ENCODE measurements at regions of chr10 and their contacts with region 1.

Region 1: DNA sequence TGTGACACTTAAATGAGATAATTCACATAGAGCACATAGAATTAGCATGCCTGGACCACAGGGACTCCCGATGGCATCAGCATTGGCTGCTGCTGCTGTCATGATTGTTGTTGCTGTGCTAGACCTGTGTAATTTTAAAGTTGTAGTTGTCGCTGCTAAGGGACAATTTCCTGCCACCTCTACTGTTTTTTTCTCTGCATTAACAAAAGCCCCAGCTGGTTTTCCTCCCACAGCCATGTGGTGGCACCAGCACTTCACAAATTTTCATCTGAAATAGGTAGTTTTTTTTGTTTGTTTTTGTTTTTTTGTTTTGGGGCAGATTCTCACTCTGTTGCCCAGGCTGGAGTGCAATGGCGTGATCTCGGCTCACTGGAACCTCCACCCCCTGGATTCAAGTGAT is 25.4 kb upstream of the PRXL2A start:
- DNase-seq: peak; percentile 64
- CTCF ChIP-seq: peak; percentile 52

Region 2: DNA sequence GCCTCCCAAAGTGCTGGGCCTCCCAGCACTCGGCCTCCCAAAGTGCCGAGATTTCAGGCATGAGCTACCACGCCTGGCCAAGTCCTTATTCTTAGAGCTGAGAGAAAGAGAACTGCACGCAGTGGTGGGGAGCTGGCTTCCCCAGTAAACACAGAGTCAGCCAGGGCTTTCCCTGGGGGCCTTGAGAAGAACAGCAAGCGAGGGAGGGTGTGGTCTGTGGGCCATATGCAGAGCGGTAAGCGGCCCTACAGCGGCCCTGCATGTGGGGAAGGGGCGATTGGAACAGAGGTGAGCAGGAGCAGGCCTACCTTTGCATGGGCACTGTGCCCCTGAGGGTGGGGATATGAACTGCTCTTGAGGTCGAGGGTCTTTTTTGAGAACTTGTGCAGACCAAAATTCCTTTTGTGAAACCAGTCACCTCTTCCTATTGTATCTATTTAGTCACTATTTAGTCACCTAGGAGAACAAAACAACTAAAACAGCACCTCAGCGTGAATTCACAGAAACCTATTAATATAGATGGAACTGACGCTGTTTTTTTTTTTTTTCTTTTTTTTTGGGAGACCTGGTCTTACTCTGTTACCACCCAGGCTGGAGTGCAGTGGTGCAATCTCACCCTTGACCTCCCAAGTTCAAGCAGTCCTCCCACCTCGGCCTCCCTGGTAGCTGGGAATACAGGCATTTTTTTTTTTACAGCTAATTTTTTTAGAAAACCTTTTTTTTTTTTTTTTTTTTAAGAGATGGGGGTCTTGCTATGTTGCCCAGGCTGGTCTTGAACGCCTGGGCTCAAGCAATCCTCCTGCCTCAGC is 117.8 kb after region 1 on chr10:
- in situ Hi-C with region 1: loop called (anchors 10 kb)
- DNase-seq: peak; percentile 61
- CTCF ChIP-seq: no peak

Region 3: GRCh38 chr10:81152656-81153055 is 769.7 kb after region 1 on chr10:
- in situ Hi-C with region 1: no loop called
- DNase-seq: no peak
- CTCF ChIP-seq: no peak